Naive thymus-derived CD4-positive, alpha-beta T cell (primary cell): ENCODE measurements at regions of chr14 and their contacts with region 1.

Region 1: GRCh38 chr14:60331201-60332045 is 82.4 kb downstream of the PPM1A start:
- DNase-seq: peak; percentile 53 to 80 (median 74)
- ATAC-seq: peak; percentile 79
- H3K4me3 ChIP-seq: peak overlapping the region; percentile 55
- H3K4me3 Mint-ChIP-seq: peak overlapping the region; percentile 87 to 98 (median 96)
- H3K27ac ChIP-seq: peak overlapping the region; percentile 55
- H3K27ac Mint-ChIP-seq: peak overlapping the region; percentile 87 to 98 (median 92)
- H3K4me1 ChIP-seq: peaks cover 4 to 13% of the 10 kb centered on the region in 2 donors
- H3K4me1 Mint-ChIP-seq: peaks cover 12 to 46% (median 29%) of the 10 kb centered on the region in 7 donors
- H3K27me3 ChIP-seq: no peaks in the 10 kb centered on the region
- H3K27me3 Mint-ChIP-seq: peaks cover 15 to 44% (median 38%) of the 10 kb centered on the region in 5 donors

Region 2: DNA sequence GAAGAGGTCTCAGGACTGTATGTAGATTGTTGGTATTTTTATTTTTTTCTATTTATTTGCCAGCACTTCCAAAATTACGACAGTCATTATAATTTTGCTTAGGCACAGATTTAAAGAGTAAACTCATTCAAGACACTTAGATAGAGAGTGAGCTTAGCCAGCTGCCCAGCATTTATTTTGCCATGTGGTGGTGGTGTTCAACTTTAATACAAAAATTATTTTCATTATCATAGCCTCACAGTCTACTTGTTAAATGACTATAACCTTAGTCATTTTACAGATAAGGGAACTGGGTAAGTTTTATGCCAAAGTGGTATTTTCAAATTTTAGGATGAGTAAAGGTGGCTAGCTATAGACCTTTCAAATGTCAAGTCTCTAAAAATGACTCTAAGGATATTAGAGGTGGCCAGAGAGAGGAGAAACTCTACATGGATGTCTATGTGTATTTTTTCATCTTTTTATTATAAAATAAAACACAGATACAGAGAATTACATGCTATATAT is 344.8 kb before region 1 on chr14:
- CTCF ChIA-PET with region 1: no interaction called
- POLR2A ChIA-PET with region 1: no interaction called
- intact Hi-C with region 1: no loop called
- DNase-seq: no peak
- ATAC-seq: no peak
- H3K4me3 ChIP-seq: no peak overlapping the region
- H3K4me3 Mint-ChIP-seq: no peak overlapping the region
- H3K27ac ChIP-seq: no peak overlapping the region
- H3K27ac Mint-ChIP-seq: no peak overlapping the region
- H3K4me1 ChIP-seq: no peaks in the 10 kb centered on the region
- H3K4me1 Mint-ChIP-seq: peaks cover 0 to 4% (median 0%) of the 10 kb centered on the region in 7 donors
- H3K27me3 ChIP-seq: no peaks in the 10 kb centered on the region
- H3K27me3 Mint-ChIP-seq: peaks cover 0 to 7% (median 7%) of the 10 kb centered on the region in 5 donors

Region 3: GRCh38 chr14:60091550-60092530 is 239.6 kb before region 1 on chr14 and contains the start of gene PCNX4:
- CTCF ChIA-PET with region 1: no interaction called
- POLR2A ChIA-PET with region 1: no interaction called
- intact Hi-C with region 1: loop called (anchors 1 to 2 kb)
- DNase-seq: peak; percentile 79 to 95 (median 94)
- ATAC-seq: peak; percentile 95
- H3K4me3 ChIP-seq: peak within 1 kb of the TSS; percentile 94
- H3K4me3 Mint-ChIP-seq: peak within 1 kb of the TSS; percentile 88 to 98 (median 95)
- H3K27ac ChIP-seq: peak within 1 kb of the TSS; percentile 96
- H3K27ac Mint-ChIP-seq: peak within 1 kb of the TSS; percentile 90 to 99 (median 96)
- H3K4me1 ChIP-seq: peaks cover 14 to 16% of the 10 kb centered on the region in 2 donors
- H3K4me1 Mint-ChIP-seq: peaks cover 28 to 48% (median 41%) of the 10 kb centered on the region in 7 donors
- H3K27me3 ChIP-seq: peaks cover 0 to 4% of the 10 kb centered on the region in 2 donors
- H3K27me3 Mint-ChIP-seq: peaks cover 0 to 5% (median 0%) of the 10 kb centered on the region in 5 donors
- total RNA-seq, gene PCNX4: 34.9 to 48.2 (median 43.3) TPM

Region 4: GRCh38 chr14:60195179-60195810 is 136.1 kb before region 1 on chr14:
- CTCF ChIA-PET with region 1: no interaction called
- POLR2A ChIA-PET with region 1: no interaction called
- intact Hi-C with region 1: loop called in 1 of 2 experiments (anchors 1 kb)
- DNase-seq: peak in 4 of 9 donors; percentile 13 to 31 (median 22)
- ATAC-seq: peak; percentile 60
- H3K4me3 ChIP-seq: no peak overlapping the region
- H3K4me3 Mint-ChIP-seq: no peak overlapping the region
- H3K27ac ChIP-seq: no peak overlapping the region
- H3K27ac Mint-ChIP-seq: no peak overlapping the region
- H3K4me1 ChIP-seq: no peaks in the 10 kb centered on the region
- H3K4me1 Mint-ChIP-seq: peaks cover 0 to 5% (median 0%) of the 10 kb centered on the region in 7 donors
- H3K27me3 ChIP-seq: no peaks in the 10 kb centered on the region
- H3K27me3 Mint-ChIP-seq: peaks cover 3 to 20% (median 10%) of the 10 kb centered on the region in 5 donors

Region 5: GRCh38 chr14:60561845-60562746 is 230.7 kb after region 1 on chr14:
- CTCF ChIA-PET with region 1: interaction called, 3 read pairs
- POLR2A ChIA-PET with region 1: no interaction called
- intact Hi-C with region 1: loop called (anchors 2 to 5 kb)
- DNase-seq: peak in 2 of 9 donors; percentile 2 to 5
- ATAC-seq: no peak
- H3K4me3 ChIP-seq: no peak overlapping the region
- H3K4me3 Mint-ChIP-seq: no peak overlapping the region
- H3K27ac ChIP-seq: no peak overlapping the region
- H3K27ac Mint-ChIP-seq: no peak overlapping the region
- H3K4me1 ChIP-seq: no peaks in the 10 kb centered on the region
- H3K4me1 Mint-ChIP-seq: no peaks in the 10 kb centered on the region
- H3K27me3 ChIP-seq: no peaks in the 10 kb centered on the region
- H3K27me3 Mint-ChIP-seq: peaks cover 0 to 14% (median 0%) of the 10 kb centered on the region in 5 donors

Region 6: GRCh38 chr14:60734465-60735242 is 403.2 kb after region 1 on chr14 and contains the start of gene MNAT1:
- CTCF ChIA-PET with region 1: no interaction called
- POLR2A ChIA-PET with region 1: no interaction called
- intact Hi-C with region 1: loop called in 1 of 2 experiments (anchors 10 kb)
- DNase-seq: peak; percentile 65 to 81 (median 75)
- ATAC-seq: peak; percentile 95
- H3K4me3 ChIP-seq: peak within 1 kb of the TSS; percentile 64
- H3K4me3 Mint-ChIP-seq: peak within 1 kb of the TSS; percentile 95 to 100 (median 99)
- H3K27ac ChIP-seq: peak within 1 kb of the TSS; percentile 70
- H3K27ac Mint-ChIP-seq: peak within 1 kb of the TSS; percentile 88 to 99 (median 94)
- H3K4me1 ChIP-seq: peaks cover 0 to 10% of the 10 kb centered on the region in 2 donors
- H3K4me1 Mint-ChIP-seq: peaks cover 22 to 37% (median 29%) of the 10 kb centered on the region in 7 donors
- H3K27me3 ChIP-seq: peaks cover 0 to 4% of the 10 kb centered on the region in 2 donors
- H3K27me3 Mint-ChIP-seq: peaks cover 13 to 42% (median 22%) of the 10 kb centered on the region in 5 donors
- total RNA-seq, gene MNAT1: 16.0 to 39.1 (median 20.0) TPM